PC-3 (cell line): ENCODE measurements at regions of chr1 and their contacts with region 1.

Region 1: GRCh38 chr1:41894808-41895483 is 23.8 kb downstream of the HIVEP3 start:
- DNase-seq: no peak
- ATAC-seq: no peak
- H3K4me3 ChIP-seq: no peak overlapping the region
- H3K27ac ChIP-seq: peak overlapping the region; percentile 71
- H3K4me1 ChIP-seq: peaks cover 38% of the 10 kb centered on the region
- H3K27me3 ChIP-seq: no peaks in the 10 kb centered on the region
- CTCF ChIP-seq: no peak

Region 2: DNA sequence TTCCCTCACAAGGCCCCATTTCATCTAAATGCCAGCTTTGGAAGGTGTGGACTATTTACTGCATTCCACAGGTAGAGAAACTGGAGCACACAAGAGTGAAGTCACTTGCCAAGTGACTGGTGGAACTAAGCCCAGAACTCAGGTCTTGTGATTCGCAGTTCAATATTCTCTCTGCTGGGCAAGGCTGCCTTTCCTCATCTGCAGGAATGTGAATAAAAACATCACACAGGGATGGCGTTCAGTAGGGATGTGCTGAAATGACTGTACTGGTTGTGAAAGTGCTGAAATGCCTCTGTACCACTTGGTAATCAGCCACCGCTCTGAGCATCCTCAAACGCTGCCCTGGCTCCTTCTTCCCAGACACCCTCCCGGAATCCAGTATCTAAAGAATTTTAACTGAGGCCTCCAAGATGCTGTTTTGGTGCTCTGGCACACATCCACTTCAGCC is 121.8 kb before region 1 on chr1:
- CTCF ChIA-PET with region 1: no interaction called
- POLR2A ChIA-PET with region 1: interaction called, 19 read pairs
- intact Hi-C with region 1: no loop called
- DNase-seq: peak; percentile 73
- ATAC-seq: peak; percentile 65
- H3K4me3 ChIP-seq: no peak overlapping the region
- H3K27ac ChIP-seq: no peak overlapping the region
- H3K4me1 ChIP-seq: peaks cover 42% of the 10 kb centered on the region
- H3K27me3 ChIP-seq: no peaks in the 10 kb centered on the region
- CTCF ChIP-seq: no peak

Region 3: DNA sequence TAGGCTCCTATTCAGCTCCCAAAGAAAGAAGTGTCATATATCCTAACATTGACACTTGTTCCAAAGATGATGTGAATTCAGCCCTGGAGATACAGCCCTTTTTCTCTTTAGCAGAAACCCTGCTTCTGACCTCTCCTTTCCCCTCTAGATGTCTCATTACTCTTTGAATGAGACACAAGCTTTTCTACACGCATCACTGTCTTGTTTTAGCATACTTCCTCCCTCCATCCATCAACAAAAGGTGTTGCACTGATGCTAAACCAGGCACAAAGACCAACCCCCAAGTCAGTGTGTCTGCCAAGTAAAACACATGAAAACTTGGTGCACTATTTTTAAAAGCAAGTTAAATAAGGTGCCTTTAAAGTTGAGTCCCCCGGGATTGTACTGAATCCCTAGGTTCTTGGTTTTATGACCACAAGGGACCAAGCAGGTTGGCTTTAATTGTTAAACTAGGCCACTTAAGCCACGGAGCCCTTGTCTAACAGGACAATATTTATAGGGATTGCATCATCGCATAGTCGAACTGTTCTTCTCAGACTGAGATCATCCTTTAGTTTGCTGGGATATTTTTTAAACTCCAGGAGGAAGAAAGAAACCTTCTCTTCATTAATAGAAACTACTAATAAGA is 157.2 kb after region 1 on chr1:
- CTCF ChIA-PET with region 1: no interaction called
- POLR2A ChIA-PET with region 1: no interaction called
- intact Hi-C with region 1: no loop called
- DNase-seq: no peak
- ATAC-seq: no peak
- H3K4me3 ChIP-seq: no peak overlapping the region
- H3K27ac ChIP-seq: no peak overlapping the region
- H3K4me1 ChIP-seq: no peaks in the 10 kb centered on the region
- H3K27me3 ChIP-seq: no peaks in the 10 kb centered on the region
- CTCF ChIP-seq: no peak

Region 4: GRCh38 chr1:42070996-42071395 is 176.1 kb after region 1 on chr1:
- CTCF ChIA-PET with region 1: no interaction called
- POLR2A ChIA-PET with region 1: no interaction called
- intact Hi-C with region 1: no loop called
- DNase-seq: no peak
- ATAC-seq: no peak
- H3K4me3 ChIP-seq: no peak overlapping the region
- H3K27ac ChIP-seq: no peak overlapping the region
- H3K4me1 ChIP-seq: no peaks in the 10 kb centered on the region
- H3K27me3 ChIP-seq: no peaks in the 10 kb centered on the region
- CTCF ChIP-seq: no peak